Gastrocnemius medialis (tissue), 4 donors: ENCODE measurements at regions of chr6 and their contacts with region 1.

Region 1: GRCh38 chr6:26537846-26538571 is at the start of gene HMGN4:
- DNase-seq: peak; percentile 58 to 72
- ATAC-seq: peak; percentile 68 to 85
- H3K4me3 ChIP-seq: peak within 1 kb of the TSS; percentile 75 to 89 (median 89)
- H3K27ac ChIP-seq: peak within 1 kb of the TSS; percentile 89 to 95 (median 92)
- H3K4me1 ChIP-seq: peaks cover 39 to 41% of the 10 kb centered on the region in 2 donors
- H3K27me3 ChIP-seq: no peaks in the 10 kb centered on the region
- CTCF ChIP-seq: no peak
- POLR2A ChIP-seq: peak; percentile 47 to 62
- total RNA-seq, gene HMGN4: 20.1 to 58.7 (median 28.4) TPM

Region 2: DNA sequence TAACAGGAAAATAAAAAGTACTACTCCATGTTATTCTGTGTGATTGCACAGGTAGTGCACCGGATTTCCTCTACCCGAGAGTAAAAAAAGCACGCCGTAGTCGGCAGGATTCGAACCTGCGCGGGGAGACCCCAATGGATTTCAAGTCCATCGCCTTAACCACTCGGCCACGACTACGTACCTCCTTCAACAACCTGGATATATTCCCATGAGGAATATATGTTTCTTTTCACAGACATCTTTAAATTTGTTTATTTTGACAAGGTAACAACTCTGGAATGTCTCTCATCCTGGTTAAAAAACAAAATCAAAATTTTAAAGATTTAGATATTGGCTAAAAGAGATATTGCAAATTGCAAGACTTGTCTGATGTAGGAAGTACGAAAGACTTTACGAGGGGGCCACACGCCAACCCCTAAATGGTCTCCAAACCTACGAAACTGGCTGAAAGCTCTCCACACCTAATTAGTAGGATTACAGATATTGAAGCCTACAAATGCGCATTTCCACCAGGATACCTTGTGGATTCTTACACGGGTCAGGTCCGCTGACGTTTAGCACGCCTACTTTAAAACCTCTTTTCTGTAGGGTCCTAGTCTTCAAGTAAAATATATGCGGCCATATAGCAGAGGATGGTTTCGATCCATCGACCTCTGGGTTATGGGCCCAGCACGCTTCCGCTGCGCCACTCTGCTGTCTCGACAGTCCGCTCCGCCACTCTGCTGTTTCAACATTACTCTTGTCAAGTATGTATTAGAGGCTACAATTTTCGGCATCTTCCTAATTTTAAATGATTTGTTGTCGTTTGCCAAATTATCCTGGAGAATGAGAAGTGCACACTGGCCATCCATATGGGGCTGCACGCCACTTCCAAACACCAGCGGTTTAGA is 225.3 kb before region 1 on chr6:
- in situ Hi-C with region 1: loop called in 1 of 4 experiments (anchors 10 kb)
- intact Hi-C with region 1: loop called (anchors 5 kb)
- DNase-seq: peak; percentile 67
- ATAC-seq: peak; percentile 81 to 82
- H3K4me3 ChIP-seq: peak overlapping the region; percentile 54 to 65 (median 54)
- H3K27ac ChIP-seq: peak overlapping the region; percentile 67 to 83 (median 75)
- H3K4me1 ChIP-seq: peaks cover 8 to 10% of the 10 kb centered on the region in 2 donors
- H3K27me3 ChIP-seq: no peaks in the 10 kb centered on the region
- CTCF ChIP-seq: no peak
- POLR2A ChIP-seq: no peak

Region 3: GRCh38 chr6:26526928-26527327 is 11.1 kb before region 1 on chr6:
- in situ Hi-C with region 1: no loop called
- intact Hi-C with region 1: no loop called
- DNase-seq: no peak
- ATAC-seq: no peak
- H3K4me3 ChIP-seq: no peak overlapping the region
- H3K27ac ChIP-seq: no peak overlapping the region
- H3K4me1 ChIP-seq: peaks cover 12 to 24% of the 10 kb centered on the region in 2 donors
- H3K27me3 ChIP-seq: no peaks in the 10 kb centered on the region
- CTCF ChIP-seq: no peak
- POLR2A ChIP-seq: no peak

Region 4: GRCh38 chr6:26553635-26554446 is 15.8 kb after region 1 on chr6:
- in situ Hi-C with region 1: no loop called
- intact Hi-C with region 1: loop called (anchors 1 kb)
- DNase-seq: peak; percentile 44 to 72
- ATAC-seq: peak; percentile 96 to 97
- H3K4me3 ChIP-seq: peak overlapping the region; percentile 52 to 63 (median 60)
- H3K27ac ChIP-seq: peak overlapping the region; percentile 75 to 85 (median 79)
- H3K4me1 ChIP-seq: peaks cover 10 to 13% of the 10 kb centered on the region in 2 donors
- H3K27me3 ChIP-seq: no peaks in the 10 kb centered on the region
- CTCF ChIP-seq: no peak
- POLR2A ChIP-seq: no peak